ENCODE measurements at regions of chr13 and their contacts with region 1.

Region 1: GRCh38 chr13:32586080-32586900 is at the start of gene PDS5B:
- DNase-seq: peak; percentile 87 to 99 (median 94)
- ATAC-seq: peak; percentile 91
- H3K4me3 ChIP-seq: peak within 1 kb of the TSS; percentile 85
- H3K4me3 Mint-ChIP-seq: peak within 1 kb of the TSS; percentile 97
- H3K27ac ChIP-seq: peak within 1 kb of the TSS; percentile 55 to 69
- H3K27ac Mint-ChIP-seq: peak within 1 kb of the TSS; percentile 93
- H3K4me1 ChIP-seq: peaks cover 12% of the 10 kb centered on the region
- H3K4me1 Mint-ChIP-seq: peaks cover 42% of the 10 kb centered on the region
- H3K27me3 ChIP-seq: no peaks in the 10 kb centered on the region
- H3K27me3 Mint-ChIP-seq: no peaks in the 10 kb centered on the region
- CTCF ChIP-seq: peak; percentile 55
- total RNA-seq, gene PDS5B: 39.8 to 40.6 TPM

Region 2: GRCh38 chr13:31835932-31836331 is 750.4 kb before region 1 on chr13:
- CTCF ChIA-PET with region 1: no interaction called
- POLR2A ChIA-PET with region 1: no interaction called
- intact Hi-C with region 1: no loop called
- DNase-seq: peak in 1 of 14 experiments; percentile 10
- ATAC-seq: no peak
- H3K4me3 ChIP-seq: no peak overlapping the region
- H3K4me3 Mint-ChIP-seq: no peak overlapping the region
- H3K27ac ChIP-seq: no peak overlapping the region
- H3K27ac Mint-ChIP-seq: no peak overlapping the region
- H3K4me1 ChIP-seq: no peaks in the 10 kb centered on the region
- H3K4me1 Mint-ChIP-seq: no peaks in the 10 kb centered on the region
- H3K27me3 ChIP-seq: no peaks in the 10 kb centered on the region
- H3K27me3 Mint-ChIP-seq: peaks cover 18% of the 10 kb centered on the region
- CTCF ChIP-seq: no peak

Region 3: DNA sequence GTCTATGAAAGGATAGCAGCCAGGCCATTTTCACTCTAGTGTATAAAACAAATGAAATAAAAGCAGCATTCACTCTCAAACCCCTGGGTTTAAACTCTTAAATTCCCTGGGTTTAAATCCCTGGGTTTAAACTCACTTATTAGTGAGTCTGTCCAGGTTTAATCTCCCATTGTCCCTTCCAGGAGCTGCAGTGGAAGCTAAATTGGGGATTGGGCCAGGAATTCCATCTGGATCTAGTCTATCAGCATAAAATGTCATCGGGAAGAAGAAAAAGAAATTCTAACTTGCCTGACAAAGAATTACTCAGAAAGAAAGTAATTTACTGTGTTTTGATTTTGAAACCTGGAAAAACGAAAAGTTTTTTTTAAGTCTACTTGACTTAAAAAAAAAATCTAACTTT is 499.9 kb before region 1 on chr13:
- CTCF ChIA-PET with region 1: no interaction called
- POLR2A ChIA-PET with region 1: no interaction called
- intact Hi-C with region 1: no loop called
- DNase-seq: no peak
- ATAC-seq: no peak
- H3K4me3 ChIP-seq: no peak overlapping the region
- H3K4me3 Mint-ChIP-seq: no peak overlapping the region
- H3K27ac ChIP-seq: no peak overlapping the region
- H3K27ac Mint-ChIP-seq: no peak overlapping the region
- H3K4me1 ChIP-seq: no peaks in the 10 kb centered on the region
- H3K4me1 Mint-ChIP-seq: no peaks in the 10 kb centered on the region
- H3K27me3 ChIP-seq: no peaks in the 10 kb centered on the region
- H3K27me3 Mint-ChIP-seq: no peaks in the 10 kb centered on the region
- CTCF ChIP-seq: no peak

Region 4: GRCh38 chr13:32315238-32316027 is 270.9 kb before region 1 on chr13 and contains the starts of genes BRCA2 and ZAR1L:
- CTCF ChIA-PET with region 1: no interaction called
- POLR2A ChIA-PET with region 1: interaction called, 10 read pairs
- intact Hi-C with region 1: loop called in 1 of 2 experiments (anchors 5 kb)
- DNase-seq: peak; percentile 74 to 95 (median 82)
- ATAC-seq: peak; percentile 94
- H3K4me3 ChIP-seq: peak within 1 kb of the TSS; percentile 84
- H3K4me3 Mint-ChIP-seq: peak within 1 kb of the TSS; percentile 96
- H3K27ac ChIP-seq: peak within 1 kb of the TSS; percentile 99 to 100
- H3K27ac Mint-ChIP-seq: peak within 1 kb of the TSS; percentile 100
- H3K4me1 ChIP-seq: peaks cover 15% of the 10 kb centered on the region
- H3K4me1 Mint-ChIP-seq: peaks cover 16% of the 10 kb centered on the region
- H3K27me3 ChIP-seq: no peaks in the 10 kb centered on the region
- H3K27me3 Mint-ChIP-seq: no peaks in the 10 kb centered on the region
- CTCF ChIP-seq: no peak
- total RNA-seq, gene BRCA2: 1.9 to 2.4 TPM
- total RNA-seq, gene ZAR1L: not detected

Region 5: DNA sequence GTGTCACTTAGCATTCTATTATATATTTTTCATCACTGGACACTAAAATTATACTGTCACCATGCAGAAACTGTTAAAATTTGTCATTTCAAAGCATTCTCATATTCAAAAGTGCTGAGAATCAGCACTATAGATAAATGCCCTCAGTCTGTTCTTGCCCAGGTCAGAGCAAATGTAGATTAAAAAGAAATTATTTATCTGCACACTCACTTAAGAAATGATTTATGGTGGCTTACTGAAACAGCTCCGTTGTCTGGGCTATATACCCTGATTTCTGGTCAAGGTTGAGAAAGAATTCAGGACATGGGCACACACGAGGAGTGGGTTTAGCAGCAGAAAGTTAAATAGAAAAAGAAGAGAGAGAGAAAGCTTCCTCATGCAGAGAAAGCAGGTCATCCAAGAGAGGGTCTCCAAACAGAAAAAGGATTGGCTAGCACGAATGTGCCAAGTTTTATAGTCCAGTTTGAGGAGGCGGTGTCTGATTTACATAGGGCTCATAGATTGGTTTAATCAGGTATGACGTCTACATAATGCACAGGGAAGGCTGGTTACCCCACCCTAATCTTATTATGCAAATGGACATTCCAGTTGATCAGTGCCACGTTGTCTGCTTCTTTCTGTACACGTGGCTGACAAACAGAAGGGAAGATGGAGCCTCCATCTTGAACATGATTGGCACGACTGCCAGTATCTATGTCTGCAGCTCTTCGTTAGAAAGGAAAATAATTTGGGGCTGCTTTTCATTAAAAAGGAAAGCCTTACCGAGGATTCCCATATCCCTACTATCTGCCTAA is 111.1 kb before region 1 on chr13:
- CTCF ChIA-PET with region 1: no interaction called
- POLR2A ChIA-PET with region 1: no interaction called
- intact Hi-C with region 1: no loop called
- DNase-seq: no peak
- ATAC-seq: no peak
- H3K4me3 ChIP-seq: no peak overlapping the region
- H3K4me3 Mint-ChIP-seq: no peak overlapping the region
- H3K27ac ChIP-seq: no peak overlapping the region
- H3K27ac Mint-ChIP-seq: no peak overlapping the region
- H3K4me1 ChIP-seq: peaks cover 2% of the 10 kb centered on the region
- H3K4me1 Mint-ChIP-seq: peaks cover 8% of the 10 kb centered on the region
- H3K27me3 ChIP-seq: no peaks in the 10 kb centered on the region
- H3K27me3 Mint-ChIP-seq: no peaks in the 10 kb centered on the region
- CTCF ChIP-seq: no peak

Region 6: GRCh38 chr13:32538621-32539246 is 47.6 kb before region 1 on chr13 and contains the start of gene N4BP2L2:
- CTCF ChIA-PET with region 1: interaction called, 16 read pairs
- POLR2A ChIA-PET with region 1: interaction called, 35 read pairs
- intact Hi-C with region 1: loop called (anchors 1 kb)
- DNase-seq: peak; percentile 82 to 97 (median 88)
- ATAC-seq: peak; percentile 96
- H3K4me3 ChIP-seq: peak within 1 kb of the TSS; percentile 81
- H3K4me3 Mint-ChIP-seq: peak within 1 kb of the TSS; percentile 100
- H3K27ac ChIP-seq: peak within 1 kb of the TSS; percentile 98
- H3K27ac Mint-ChIP-seq: peak within 1 kb of the TSS; percentile 100
- H3K4me1 ChIP-seq: peaks cover 18% of the 10 kb centered on the region
- H3K4me1 Mint-ChIP-seq: peaks cover 55% of the 10 kb centered on the region
- H3K27me3 ChIP-seq: no peaks in the 10 kb centered on the region
- H3K27me3 Mint-ChIP-seq: peaks cover 5% of the 10 kb centered on the region
- CTCF ChIP-seq: peak; percentile 33
- total RNA-seq, gene N4BP2L2: 171 TPM

Region 7: DNA sequence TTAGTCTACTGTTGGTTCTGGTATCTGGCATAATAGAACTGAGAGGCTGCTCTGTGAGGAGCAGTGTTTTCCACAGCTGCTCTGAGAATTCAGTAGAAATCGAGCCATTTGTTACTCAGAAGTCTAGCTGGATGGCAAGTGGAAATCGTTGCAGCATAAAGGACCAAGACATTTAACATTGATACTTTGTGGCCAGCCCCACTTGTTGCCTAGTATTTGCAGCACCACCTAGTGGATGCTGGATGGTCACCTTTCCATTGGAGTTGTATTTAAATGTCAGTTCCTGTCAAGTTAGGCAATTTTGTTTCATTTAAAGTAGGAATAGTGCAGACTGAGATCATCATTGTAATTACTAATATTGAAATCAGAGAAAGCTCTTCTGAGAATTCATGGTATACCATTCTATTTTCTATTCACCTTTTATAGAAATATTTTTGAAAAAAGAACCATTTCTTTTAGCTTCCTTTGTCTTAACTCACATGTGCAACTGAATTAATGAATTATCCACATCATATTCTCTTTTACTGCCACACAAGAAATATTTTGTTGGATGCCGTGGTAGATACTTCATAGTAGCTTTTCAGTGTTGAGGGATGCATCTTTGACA is 64.5 kb after region 1 on chr13:
- CTCF ChIA-PET with region 1: interaction called, 52 read pairs
- POLR2A ChIA-PET with region 1: interaction called, 15 read pairs
- intact Hi-C with region 1: no loop called
- DNase-seq: peak in 12 of 14 experiments; percentile 20 to 79 (median 39)
- ATAC-seq: peak; percentile 81
- H3K4me3 ChIP-seq: no peak overlapping the region
- H3K4me3 Mint-ChIP-seq: no peak overlapping the region
- H3K27ac ChIP-seq: no peak overlapping the region
- H3K27ac Mint-ChIP-seq: no peak overlapping the region
- H3K4me1 ChIP-seq: peaks cover 10% of the 10 kb centered on the region
- H3K4me1 Mint-ChIP-seq: peaks cover 45% of the 10 kb centered on the region
- H3K27me3 ChIP-seq: no peaks in the 10 kb centered on the region
- H3K27me3 Mint-ChIP-seq: no peaks in the 10 kb centered on the region
- CTCF ChIP-seq: peak; percentile 85

Region 8: DNA sequence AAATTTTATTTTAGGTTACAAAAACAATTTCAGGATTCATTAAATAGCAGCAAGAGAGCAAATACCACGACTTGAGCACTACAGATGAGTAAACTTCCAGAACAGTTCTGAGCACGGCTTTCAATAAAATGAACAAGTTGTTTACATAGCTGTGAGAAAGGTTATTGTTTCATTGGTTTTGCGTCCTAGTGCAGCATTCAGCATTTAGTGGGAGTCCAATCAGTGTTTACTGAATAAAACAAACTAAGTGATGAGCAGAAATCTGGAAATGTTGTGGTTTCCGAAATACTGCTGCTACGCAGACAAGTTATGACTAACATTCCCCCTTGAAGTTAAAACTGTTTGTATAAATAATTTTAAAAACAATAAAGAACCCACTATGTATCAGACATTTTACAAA is 950.7 kb after region 1 on chr13:
- CTCF ChIA-PET with region 1: interaction called, 4 read pairs
- POLR2A ChIA-PET with region 1: interaction called, 10 read pairs
- intact Hi-C with region 1: loop called (anchors 1 to 2 kb)
- DNase-seq: no peak
- ATAC-seq: no peak
- H3K4me3 ChIP-seq: no peak overlapping the region
- H3K4me3 Mint-ChIP-seq: no peak overlapping the region
- H3K27ac ChIP-seq: no peak overlapping the region
- H3K27ac Mint-ChIP-seq: no peak overlapping the region
- H3K4me1 ChIP-seq: peaks cover 11% of the 10 kb centered on the region
- H3K4me1 Mint-ChIP-seq: peaks cover 25% of the 10 kb centered on the region
- H3K27me3 ChIP-seq: no peaks in the 10 kb centered on the region
- H3K27me3 Mint-ChIP-seq: no peaks in the 10 kb centered on the region
- CTCF ChIP-seq: no peak

Region 9: DNA sequence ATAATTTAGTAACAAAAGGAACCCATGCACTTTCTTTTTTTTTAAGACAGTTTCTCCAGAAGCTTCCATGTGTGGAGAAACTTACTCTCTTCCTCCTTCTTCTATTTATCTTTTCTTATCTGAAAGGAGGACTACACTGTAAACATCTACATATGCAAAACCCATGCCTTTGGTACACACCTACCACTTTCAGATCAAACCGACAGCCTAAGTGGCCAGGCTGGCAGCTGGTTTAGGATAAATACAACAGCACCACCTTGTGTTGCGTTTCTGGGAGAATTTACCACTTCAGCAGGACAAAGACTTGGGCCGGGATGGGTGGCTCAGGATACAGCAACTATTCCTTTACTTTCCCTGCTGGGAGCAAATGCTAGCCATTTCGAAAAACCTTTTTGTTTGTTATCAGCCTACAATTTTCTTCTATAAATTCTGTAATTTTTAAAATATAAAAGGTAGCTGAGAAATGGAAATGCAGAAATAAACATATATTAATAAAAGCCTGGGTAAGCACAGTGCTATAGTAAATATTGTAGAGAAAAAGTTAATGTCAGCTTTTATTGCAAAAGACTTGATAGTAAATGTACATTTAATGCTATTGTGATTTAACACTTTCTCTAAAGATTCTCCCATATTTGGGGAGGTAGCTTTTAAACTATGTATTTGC is 1137.6 kb after region 1 on chr13:
- CTCF ChIA-PET with region 1: no interaction called
- POLR2A ChIA-PET with region 1: no interaction called
- intact Hi-C with region 1: loop called in 1 of 2 experiments (anchors 2 kb)
- DNase-seq: peak; percentile 27 to 86 (median 50)
- ATAC-seq: peak; percentile 91
- H3K4me3 ChIP-seq: no peak overlapping the region
- H3K4me3 Mint-ChIP-seq: no peak overlapping the region
- H3K27ac ChIP-seq: no peak overlapping the region
- H3K27ac Mint-ChIP-seq: no peak overlapping the region
- H3K4me1 ChIP-seq: peaks cover 4% of the 10 kb centered on the region
- H3K4me1 Mint-ChIP-seq: peaks cover 27% of the 10 kb centered on the region
- H3K27me3 ChIP-seq: no peaks in the 10 kb centered on the region
- H3K27me3 Mint-ChIP-seq: no peaks in the 10 kb centered on the region
- CTCF ChIP-seq: peak; percentile 69

Measured in CD4-positive, alpha-beta T cell (primary cell).